T-cell (primary cell): ENCODE measurements at regions of chr3 and their contacts with region 1.

Region 1: DNA sequence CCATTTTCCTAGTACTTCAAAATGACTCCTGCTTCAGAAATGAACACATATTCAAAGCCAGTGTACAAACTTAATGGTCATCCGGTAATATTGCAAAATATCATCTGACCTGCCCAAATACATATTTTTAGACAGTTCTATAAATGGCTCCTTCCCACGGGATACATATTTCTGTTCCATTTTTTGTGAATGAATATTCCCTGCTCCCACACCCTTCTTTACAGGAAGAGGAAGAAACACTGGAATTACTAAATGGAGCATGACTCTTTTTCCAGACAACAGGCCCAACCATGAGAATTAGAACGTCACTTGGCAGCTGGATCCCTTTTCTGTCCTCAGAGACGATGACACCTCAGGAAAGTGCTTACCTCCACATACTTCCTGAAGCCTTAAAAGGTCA is 38.0 kb upstream of the CBLB start:
- DNase-seq: no peak
- ATAC-seq: no peak
- H3K4me3 ChIP-seq: no peak overlapping the region
- H3K4me3 Mint-ChIP-seq: no peak overlapping the region
- H3K27ac ChIP-seq: no peak overlapping the region
- H3K27ac Mint-ChIP-seq: no peak overlapping the region
- H3K4me1 ChIP-seq: peaks cover 0 to 11% of the 10 kb centered on the region in 2 experiments
- H3K4me1 Mint-ChIP-seq: peaks cover 0 to 11% (median 6%) of the 10 kb centered on the region in 3 donors
- H3K27me3 ChIP-seq: no peaks in the 10 kb centered on the region
- H3K27me3 Mint-ChIP-seq: no peaks in the 10 kb centered on the region

Region 2: DNA sequence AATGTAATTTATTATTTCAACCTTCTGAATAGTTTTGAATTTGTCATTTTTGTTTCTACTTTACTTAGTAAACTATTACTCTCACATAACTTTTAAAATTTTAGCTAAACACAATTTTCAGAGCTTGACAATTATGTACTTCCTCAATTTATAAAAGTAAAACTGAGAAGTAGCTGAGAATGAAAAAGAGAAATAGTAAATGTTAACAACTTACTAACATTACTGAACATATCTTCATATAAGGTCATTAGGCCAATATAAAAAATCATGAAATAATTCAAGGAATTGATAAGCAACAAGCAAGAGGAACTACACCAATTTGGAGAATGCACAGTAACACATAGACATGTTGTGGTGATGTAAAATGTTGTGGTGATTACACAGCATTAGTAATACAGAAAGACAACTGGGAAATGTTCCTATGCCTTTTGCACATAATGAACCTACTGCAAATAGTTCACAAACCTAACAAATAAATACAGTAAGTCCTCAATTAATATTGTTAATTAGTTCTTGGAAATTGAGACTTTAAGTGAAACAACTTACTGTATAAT is 176.0 kb before region 1 on chr3:
- CTCF ChIA-PET with region 1: no interaction called
- POLR2A ChIA-PET with region 1: interaction called in 1 of 2 experiments, 10 read pairs
- DNase-seq: no peak
- ATAC-seq: no peak
- H3K4me3 ChIP-seq: no peak overlapping the region
- H3K4me3 Mint-ChIP-seq: no peak overlapping the region
- H3K27ac ChIP-seq: no peak overlapping the region
- H3K27ac Mint-ChIP-seq: no peak overlapping the region
- H3K4me1 ChIP-seq: no peaks in the 10 kb centered on the region
- H3K4me1 Mint-ChIP-seq: peaks cover 17 to 31% (median 26%) of the 10 kb centered on the region in 3 donors
- H3K27me3 ChIP-seq: no peaks in the 10 kb centered on the region
- H3K27me3 Mint-ChIP-seq: no peaks in the 10 kb centered on the region

Region 3: GRCh38 chr3:105933871-105934270 is 27.0 kb after region 1 on chr3:
- CTCF ChIA-PET with region 1: no interaction called
- POLR2A ChIA-PET with region 1: interaction called in 1 of 2 experiments, 16 read pairs
- DNase-seq: no peak
- ATAC-seq: no peak
- H3K4me3 ChIP-seq: no peak overlapping the region
- H3K4me3 Mint-ChIP-seq: no peak overlapping the region
- H3K27ac ChIP-seq: no peak overlapping the region
- H3K27ac Mint-ChIP-seq: no peak overlapping the region
- H3K4me1 ChIP-seq: no peaks in the 10 kb centered on the region
- H3K4me1 Mint-ChIP-seq: peaks cover 0 to 7% (median 4%) of the 10 kb centered on the region in 3 donors
- H3K27me3 ChIP-seq: no peaks in the 10 kb centered on the region
- H3K27me3 Mint-ChIP-seq: no peaks in the 10 kb centered on the region

Region 4: DNA sequence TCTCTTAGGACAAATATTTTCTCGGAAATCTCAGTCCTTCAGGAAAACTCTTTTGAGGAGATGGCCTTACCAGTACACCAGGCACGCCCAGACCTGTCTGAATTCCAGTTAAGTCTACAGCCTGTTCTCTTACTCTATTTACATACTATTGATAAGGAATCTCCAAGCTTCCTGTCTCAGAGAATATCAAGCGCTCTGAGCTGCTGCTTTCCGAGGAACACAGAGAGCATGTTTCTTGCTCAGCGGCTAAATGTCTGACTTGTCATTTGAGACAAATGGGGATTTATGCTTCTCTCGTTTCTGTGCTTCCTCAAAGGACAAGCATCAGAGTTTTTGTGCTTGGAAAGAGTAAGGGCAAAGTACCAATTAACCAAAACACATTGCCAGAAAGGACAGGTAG is 1358.1 kb after region 1 on chr3:
- CTCF ChIA-PET with region 1: no interaction called
- POLR2A ChIA-PET with region 1: no interaction called
- DNase-seq: no peak
- ATAC-seq: no peak
- H3K4me3 ChIP-seq: no peak overlapping the region
- H3K4me3 Mint-ChIP-seq: no peak overlapping the region
- H3K27ac ChIP-seq: no peak overlapping the region
- H3K27ac Mint-ChIP-seq: no peak overlapping the region
- H3K4me1 ChIP-seq: no peaks in the 10 kb centered on the region
- H3K4me1 Mint-ChIP-seq: peaks cover 4 to 10% (median 6%) of the 10 kb centered on the region in 3 donors
- H3K27me3 ChIP-seq: no peaks in the 10 kb centered on the region
- H3K27me3 Mint-ChIP-seq: no peaks in the 10 kb centered on the region